GM12878 (cell line): ENCODE measurements at regions of chr2 and their contacts with region 1.

Region 1: DNA sequence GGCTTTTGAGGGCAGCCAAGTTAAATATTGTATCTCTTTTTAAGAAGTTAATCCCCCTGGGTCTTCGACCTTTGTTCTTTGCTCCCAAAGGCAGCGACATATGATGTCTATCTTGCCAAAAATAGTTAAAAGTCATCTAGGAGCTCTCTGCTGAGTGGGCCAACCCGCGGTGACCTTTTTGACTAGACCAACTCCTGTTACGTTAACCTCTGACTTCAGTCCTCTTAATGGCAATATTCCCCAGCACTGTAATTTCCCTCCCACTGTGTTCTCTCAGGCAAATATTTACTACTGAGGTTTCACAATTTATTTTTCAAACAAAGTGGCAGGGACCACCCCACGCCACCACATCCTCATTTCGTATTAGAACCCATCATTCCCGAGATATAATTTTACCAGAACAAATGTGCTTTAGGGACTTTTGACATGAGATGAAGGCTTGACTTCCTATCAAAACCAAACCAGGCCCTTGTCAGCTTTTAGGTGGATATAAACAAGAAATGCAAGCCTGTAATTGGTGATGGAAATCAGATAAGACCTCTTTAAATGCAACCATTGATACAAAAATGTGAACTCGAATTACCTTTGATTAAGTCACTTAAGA is 764.7 kb downstream of the SATB2 start:
- DNase-seq: no peak
- ATAC-seq: peak; percentile 77
- H3K4me3 ChIP-seq: no peak overlapping the region
- H3K27ac ChIP-seq: no peak overlapping the region
- H3K4me1 ChIP-seq: no peaks in the 10 kb centered on the region
- H3K27me3 ChIP-seq: no peaks in the 10 kb centered on the region
- CTCF ChIP-seq: no peak
- EP300 ChIP-seq: no peak
- POLR2A ChIP-seq: no peak
- RAD21 ChIP-seq: no peak

Region 2: DNA sequence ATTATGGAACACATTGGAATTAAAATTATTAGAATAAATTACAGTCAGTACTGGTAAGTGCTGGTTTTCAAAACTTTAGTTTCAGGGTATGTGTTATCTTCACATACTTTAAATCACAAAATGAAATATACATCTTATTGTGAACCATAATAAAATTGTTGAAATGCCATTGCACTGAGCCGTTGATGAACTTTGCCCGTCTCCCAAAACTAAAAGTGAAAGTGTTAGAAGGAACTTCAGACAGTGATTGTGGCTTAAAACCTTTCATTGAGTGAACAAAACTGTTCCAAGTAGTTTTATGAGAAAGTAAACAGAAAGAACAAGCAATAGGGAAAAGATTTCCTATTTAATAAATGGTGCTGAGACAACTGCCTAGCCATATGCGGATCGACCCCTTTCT is 77.0 kb before region 1 on chr2:
- CTCF ChIA-PET with region 1: no interaction called
- POLR2A ChIA-PET with region 1: no interaction called
- RAD21 ChIA-PET with region 1: no interaction called
- SMC1A ChIA-PET with region 1: no interaction called
- in situ Hi-C with region 1: no loop called
- intact Hi-C with region 1: no loop called
- DNase-seq: no peak
- ATAC-seq: peak; percentile 78
- H3K4me3 ChIP-seq: no peak overlapping the region
- H3K27ac ChIP-seq: no peak overlapping the region
- H3K4me1 ChIP-seq: no peaks in the 10 kb centered on the region
- H3K27me3 ChIP-seq: no peaks in the 10 kb centered on the region; a peak in 1 of 4 replicates
- CTCF ChIP-seq: no peak
- EP300 ChIP-seq: no peak
- POLR2A ChIP-seq: no peak
- RAD21 ChIP-seq: no peak

Region 3: DNA sequence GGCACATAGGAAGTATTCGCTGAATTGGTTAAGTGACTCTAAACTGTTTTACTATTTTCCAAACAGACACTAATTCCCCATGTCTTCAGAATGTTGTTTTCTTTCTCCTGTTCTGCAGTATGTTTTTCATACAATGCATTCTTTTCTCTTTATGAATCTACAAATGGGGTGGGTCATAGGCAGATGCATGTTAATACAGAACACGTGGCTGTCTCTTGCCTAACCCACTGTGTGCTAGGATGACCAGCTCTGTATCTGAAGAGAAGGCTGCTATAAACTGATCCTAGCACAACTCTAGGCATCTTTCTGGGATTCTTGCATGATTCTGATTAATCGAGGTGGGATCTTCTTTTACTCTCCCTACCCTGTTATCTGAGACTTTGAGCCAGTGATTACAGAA is 62.6 kb before region 1 on chr2:
- CTCF ChIA-PET with region 1: no interaction called
- POLR2A ChIA-PET with region 1: no interaction called
- RAD21 ChIA-PET with region 1: no interaction called
- SMC1A ChIA-PET with region 1: no interaction called
- in situ Hi-C with region 1: no loop called
- intact Hi-C with region 1: no loop called
- DNase-seq: no peak
- ATAC-seq: no peak
- H3K4me3 ChIP-seq: no peak overlapping the region
- H3K27ac ChIP-seq: no peak overlapping the region
- H3K4me1 ChIP-seq: no peaks in the 10 kb centered on the region
- H3K27me3 ChIP-seq: no peaks in the 10 kb centered on the region; a peak in 2 of 4 replicates
- CTCF ChIP-seq: no peak
- EP300 ChIP-seq: no peak
- POLR2A ChIP-seq: no peak
- RAD21 ChIP-seq: no peak

Region 4: GRCh38 chr2:198706476-198707082 is 13.6 kb after region 1 on chr2:
- CTCF ChIA-PET with region 1: interaction called, 17 read pairs
- POLR2A ChIA-PET with region 1: interaction called, 8 read pairs
- RAD21 ChIA-PET with region 1: interaction called, 19 read pairs
- SMC1A ChIA-PET with region 1: interaction called, 25 read pairs
- in situ Hi-C with region 1: no loop called
- intact Hi-C with region 1: no loop called
- DNase-seq: no peak
- ATAC-seq: no peak
- H3K4me3 ChIP-seq: no peak overlapping the region
- H3K27ac ChIP-seq: no peak overlapping the region
- H3K4me1 ChIP-seq: no peaks in the 10 kb centered on the region
- H3K27me3 ChIP-seq: no peaks in the 10 kb centered on the region
- CTCF ChIP-seq: no peak
- EP300 ChIP-seq: no peak
- POLR2A ChIP-seq: no peak
- RAD21 ChIP-seq: no peak